PC-9 (cell line): ENCODE measurements at regions of chr10 and their contacts with region 1.

Region 1: GRCh38 chr10:133278577-133279265 is 2.1 kb upstream of the ADAM8 start:
- DNase-seq: peak; percentile 88 to 91
- H3K4me3 ChIP-seq: peak overlapping the region; percentile 28; the same call in 1 of the 2 replicates
- H3K27ac ChIP-seq: peak overlapping the region; percentile 89
- H3K4me1 ChIP-seq: peaks cover 49% of the 10 kb centered on the region
- H3K27me3 ChIP-seq: no peaks in the 10 kb centered on the region
- CTCF ChIP-seq: no peak

Region 2: GRCh38 chr10:132133005-132133404 is 1145.7 kb before region 1 on chr10:
- CTCF ChIA-PET with region 1: no interaction called
- POLR2A ChIA-PET with region 1: no interaction called
- intact Hi-C with region 1: no loop called
- DNase-seq: no peak
- H3K4me3 ChIP-seq: no peak overlapping the region
- H3K27ac ChIP-seq: no peak overlapping the region
- H3K4me1 ChIP-seq: no peaks in the 10 kb centered on the region
- H3K27me3 ChIP-seq: no peaks in the 10 kb centered on the region
- CTCF ChIP-seq: no peak

Region 3: DNA sequence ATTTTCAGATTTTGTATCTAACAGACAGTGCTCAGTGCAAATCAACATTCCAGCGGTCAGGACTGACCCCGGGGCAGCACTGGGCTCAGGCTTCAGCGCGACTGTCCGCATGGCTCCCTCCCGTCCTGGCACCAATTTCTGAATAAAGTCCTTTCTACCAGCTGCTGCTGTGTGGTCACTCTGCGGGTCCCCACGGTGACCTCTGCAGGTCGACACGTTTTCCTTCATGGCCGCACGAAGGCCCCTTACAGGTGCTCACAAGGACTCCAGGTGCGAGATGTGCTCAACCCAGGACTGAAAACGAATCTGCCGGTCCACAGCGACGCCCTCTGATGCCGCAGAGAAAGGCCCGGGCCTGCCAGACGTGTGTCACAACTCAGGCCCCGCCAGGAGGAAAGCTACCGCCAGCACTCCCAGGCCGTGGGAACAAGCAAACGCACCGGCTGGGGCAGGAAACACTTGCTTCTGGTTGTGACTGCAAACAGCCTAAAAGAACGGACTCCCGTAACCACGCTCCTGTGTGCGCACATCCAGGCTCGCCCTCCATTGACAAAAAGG is 52.4 kb before region 1 on chr10:
- CTCF ChIA-PET with region 1: no interaction called
- POLR2A ChIA-PET with region 1: no interaction called
- intact Hi-C with region 1: loop called (anchors 10 kb)
- DNase-seq: no peak
- H3K4me3 ChIP-seq: no peak overlapping the region
- H3K27ac ChIP-seq: no peak overlapping the region
- H3K4me1 ChIP-seq: no peaks in the 10 kb centered on the region
- H3K27me3 ChIP-seq: peaks cover 43% of the 10 kb centered on the region
- CTCF ChIP-seq: no peak

Region 4: DNA sequence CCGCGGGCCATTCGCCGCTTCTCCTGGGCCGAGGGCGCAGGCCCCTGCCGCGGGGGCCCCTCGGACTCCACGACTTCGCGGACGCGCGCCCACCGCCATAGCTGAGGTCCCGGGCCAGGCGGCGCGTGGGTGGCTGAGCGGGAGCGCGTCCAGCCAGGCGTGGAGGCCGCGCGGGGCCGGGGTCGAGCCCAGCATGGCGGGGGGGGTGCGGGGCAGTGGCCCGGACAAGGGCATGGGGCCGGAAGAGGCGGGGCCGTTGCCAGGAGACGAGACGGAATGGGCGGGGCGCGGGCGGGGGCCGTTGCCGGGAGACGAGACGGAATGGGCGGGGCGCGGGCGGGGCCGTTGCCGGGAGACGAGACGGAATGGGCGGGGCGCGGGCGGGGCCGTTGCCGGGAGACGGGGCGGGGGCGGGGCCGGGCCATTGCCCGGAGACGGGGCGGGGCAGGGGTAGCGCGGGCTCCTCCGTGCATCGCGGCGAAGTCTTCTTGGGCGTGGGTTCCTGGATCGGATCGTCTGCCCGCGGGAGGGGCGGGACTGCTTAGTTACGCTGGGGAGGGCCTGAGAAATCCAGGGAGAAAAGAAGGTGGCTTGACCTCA is 16.9 kb before region 1 on chr10:
- CTCF ChIA-PET with region 1: no interaction called
- POLR2A ChIA-PET with region 1: interaction called, 10 read pairs
- intact Hi-C with region 1: loop called (anchors 1 kb)
- DNase-seq: peak in 1 of 2 experiments; percentile 64
- H3K4me3 ChIP-seq: peak overlapping the region; percentile 55
- H3K27ac ChIP-seq: no peak overlapping the region
- H3K4me1 ChIP-seq: peaks cover 41% of the 10 kb centered on the region
- H3K27me3 ChIP-seq: no peaks in the 10 kb centered on the region
- CTCF ChIP-seq: no peak

Region 5: DNA sequence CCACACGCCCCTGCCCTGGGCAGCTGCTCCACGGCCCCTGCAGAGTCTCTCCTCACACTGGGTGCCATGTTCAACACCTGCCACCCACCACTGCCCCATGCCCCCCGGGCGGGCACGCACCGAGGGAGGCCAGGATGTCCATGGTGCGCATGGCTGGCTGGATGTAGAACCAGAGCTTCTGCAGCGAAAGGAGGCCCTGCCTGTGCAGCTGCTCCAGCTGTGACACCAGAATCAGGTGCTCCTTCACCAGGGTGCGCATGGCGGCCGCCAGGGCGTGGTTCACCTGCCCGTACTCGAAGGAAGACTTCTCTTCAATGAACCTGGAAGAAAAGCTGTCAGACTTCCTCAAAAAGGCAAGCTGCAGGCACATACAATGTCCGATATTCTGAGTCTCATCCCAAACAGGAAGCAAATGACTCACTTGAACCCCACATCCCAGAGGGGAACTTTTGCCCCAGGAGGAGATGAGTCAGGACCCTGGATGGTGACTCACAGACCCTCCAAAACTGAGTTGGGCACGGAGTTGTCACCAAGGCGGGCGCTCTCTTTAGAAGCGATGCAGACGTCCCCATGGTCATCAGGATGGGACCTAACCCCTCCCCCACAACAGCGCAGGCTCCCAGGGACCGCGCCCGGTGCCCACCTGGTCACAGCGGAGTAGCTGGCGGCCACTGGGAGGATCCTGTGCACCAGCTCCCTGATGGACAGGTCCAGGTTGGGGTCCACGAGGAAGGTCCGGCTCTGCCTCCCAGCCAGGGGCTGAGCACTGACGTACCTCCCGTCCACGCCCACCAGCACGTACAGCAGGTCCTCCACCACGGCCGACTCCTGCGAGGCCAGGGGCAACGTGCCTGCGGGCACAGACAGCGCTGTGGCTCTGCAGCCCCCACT is 14.4 kb after region 1 on chr10:
- CTCF ChIA-PET with region 1: no interaction called
- POLR2A ChIA-PET with region 1: no interaction called
- intact Hi-C with region 1: loop called (anchors 1 kb)
- DNase-seq: peak; percentile 66 to 73
- H3K4me3 ChIP-seq: no peak overlapping the region; the same call in 1 of the 2 replicates
- H3K27ac ChIP-seq: peak overlapping the region; percentile 72
- H3K4me1 ChIP-seq: peaks cover 22% of the 10 kb centered on the region
- H3K27me3 ChIP-seq: no peaks in the 10 kb centered on the region
- CTCF ChIP-seq: no peak

Region 6: GRCh38 chr10:133329491-133330202 is 50.9 kb after region 1 on chr10:
- CTCF ChIA-PET with region 1: no interaction called
- POLR2A ChIA-PET with region 1: no interaction called
- intact Hi-C with region 1: no loop called
- DNase-seq: peak; percentile 54 to 73
- H3K4me3 ChIP-seq: peak overlapping the region; percentile 45; the same call in 1 of the 2 replicates
- H3K27ac ChIP-seq: no peak overlapping the region
- H3K4me1 ChIP-seq: no peaks in the 10 kb centered on the region
- H3K27me3 ChIP-seq: peaks cover 15% of the 10 kb centered on the region
- CTCF ChIP-seq: peak; percentile 90

Region 7: DNA sequence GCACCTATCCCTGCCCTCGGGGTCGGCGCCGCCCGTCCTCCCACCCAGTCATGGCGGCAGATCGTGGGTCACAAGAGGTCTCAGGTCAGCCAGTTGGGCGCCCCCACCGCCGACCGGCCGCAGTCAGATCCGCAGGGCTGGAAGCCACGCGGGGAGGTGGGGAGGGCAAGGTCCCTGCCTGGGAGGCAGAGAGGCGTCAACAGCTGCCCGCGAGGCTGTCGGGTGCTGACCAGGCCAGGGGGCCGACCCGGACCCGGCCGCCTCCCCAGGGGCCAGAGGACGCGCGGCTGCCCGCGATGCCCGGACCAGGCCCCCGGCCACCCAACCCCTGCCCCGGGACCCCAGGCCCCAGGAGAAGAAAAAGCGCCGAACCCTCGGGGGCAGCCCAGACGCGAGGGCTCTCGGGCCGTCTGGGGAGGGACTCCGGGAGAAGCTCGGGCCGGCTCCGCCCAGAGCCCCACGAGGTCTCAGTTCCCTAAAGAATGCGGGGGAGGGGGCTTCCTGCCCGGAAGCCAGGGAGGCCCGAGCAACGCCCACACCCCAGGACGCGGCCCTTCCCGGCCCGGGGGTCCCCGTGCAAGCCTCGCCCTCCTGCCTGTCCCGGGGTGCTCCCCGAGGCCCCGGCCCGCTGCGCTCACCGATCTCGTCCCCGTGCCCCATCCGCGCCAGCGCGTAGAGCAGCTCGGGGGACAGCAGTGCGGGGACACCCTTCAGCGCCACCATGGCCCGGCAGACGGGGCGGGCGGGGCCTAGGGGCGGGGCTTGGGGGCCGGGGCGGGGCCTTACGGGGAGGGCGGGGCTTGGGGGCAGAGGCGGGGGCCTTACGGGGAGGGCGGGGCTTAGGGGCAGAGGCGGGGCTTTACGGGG is 78.8 kb after region 1 on chr10 and contains the start of gene FUOM:
- CTCF ChIA-PET with region 1: no interaction called
- POLR2A ChIA-PET with region 1: no interaction called
- intact Hi-C with region 1: no loop called
- DNase-seq: peak in 1 of 2 experiments; percentile 41
- H3K4me3 ChIP-seq: peak within 1 kb of the TSS; percentile 63
- H3K27ac ChIP-seq: no peak within 1 kb of the TSS
- H3K4me1 ChIP-seq: no peaks in the 10 kb centered on the region
- H3K27me3 ChIP-seq: no peaks in the 10 kb centered on the region
- CTCF ChIP-seq: no peak
- total RNA-seq, gene FUOM: 7.4 and 12.5 TPM in 2 replicates

Region 8: DNA sequence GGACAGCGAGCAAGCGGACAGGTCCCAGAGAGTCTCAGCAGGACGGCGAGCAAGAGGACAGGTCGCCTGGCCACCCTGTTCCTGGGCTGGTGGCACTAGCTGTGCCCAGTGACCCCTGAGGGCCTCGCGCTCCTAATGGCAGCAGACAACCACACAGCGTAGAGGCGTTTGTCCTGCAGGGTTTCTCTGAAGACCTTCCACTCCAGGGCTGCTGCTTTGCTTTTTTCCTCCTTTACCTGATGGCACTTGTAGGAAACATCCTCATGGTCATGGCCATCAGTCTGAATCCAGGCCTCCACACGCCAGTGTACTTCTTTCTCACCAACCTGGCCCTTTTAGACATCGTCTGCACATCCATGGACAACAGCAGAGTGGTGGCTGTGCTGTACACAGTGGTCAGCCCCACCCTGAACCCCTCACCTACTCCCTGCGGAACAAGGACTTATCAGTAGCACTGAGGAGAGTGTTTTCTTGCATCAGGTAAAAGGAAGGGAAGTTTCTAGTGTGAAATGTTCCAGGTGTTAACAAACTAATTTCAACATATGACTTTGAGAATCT is 202.4 kb after region 1 on chr10:
- CTCF ChIA-PET with region 1: no interaction called
- POLR2A ChIA-PET with region 1: no interaction called
- intact Hi-C with region 1: no loop called
- DNase-seq: no peak
- H3K4me3 ChIP-seq: no peak overlapping the region
- H3K27ac ChIP-seq: no peak overlapping the region
- H3K4me1 ChIP-seq: no peaks in the 10 kb centered on the region
- H3K27me3 ChIP-seq: peaks cover 23% of the 10 kb centered on the region
- CTCF ChIP-seq: no peak